Endothelial cell of umbilical vein (primary cell): ENCODE measurements at regions of chr12 and their contacts with region 1.

Region 1: GRCh38 chr12:104108755-104109445 is 29.1 kb downstream of the NFYB start:
- DNase-seq: peak; percentile 90
- H3K4me3 ChIP-seq: no peak overlapping the region
- H3K27ac ChIP-seq: no peak overlapping the region
- H3K4me1 ChIP-seq: no peaks in the 10 kb centered on the region
- H3K27me3 ChIP-seq: no peaks in the 10 kb centered on the region
- CTCF ChIP-seq: peak; percentile 83 to 92
- POLR2A ChIP-seq: no peak

Region 2: GRCh38 chr12:103672401-103673119 is 436.3 kb before region 1 on chr12:
- CTCF ChIA-PET with region 1: no interaction called
- POLR2A ChIA-PET with region 1: no interaction called
- dilution Hi-C with region 1: no loop called
- intact Hi-C with region 1: no loop called
- DNase-seq: no peak
- H3K4me3 ChIP-seq: no peak overlapping the region
- H3K27ac ChIP-seq: no peak overlapping the region
- H3K4me1 ChIP-seq: no peaks in the 10 kb centered on the region
- H3K27me3 ChIP-seq: no peaks in the 10 kb centered on the region
- CTCF ChIP-seq: no peak
- POLR2A ChIP-seq: no peak

Region 3: DNA sequence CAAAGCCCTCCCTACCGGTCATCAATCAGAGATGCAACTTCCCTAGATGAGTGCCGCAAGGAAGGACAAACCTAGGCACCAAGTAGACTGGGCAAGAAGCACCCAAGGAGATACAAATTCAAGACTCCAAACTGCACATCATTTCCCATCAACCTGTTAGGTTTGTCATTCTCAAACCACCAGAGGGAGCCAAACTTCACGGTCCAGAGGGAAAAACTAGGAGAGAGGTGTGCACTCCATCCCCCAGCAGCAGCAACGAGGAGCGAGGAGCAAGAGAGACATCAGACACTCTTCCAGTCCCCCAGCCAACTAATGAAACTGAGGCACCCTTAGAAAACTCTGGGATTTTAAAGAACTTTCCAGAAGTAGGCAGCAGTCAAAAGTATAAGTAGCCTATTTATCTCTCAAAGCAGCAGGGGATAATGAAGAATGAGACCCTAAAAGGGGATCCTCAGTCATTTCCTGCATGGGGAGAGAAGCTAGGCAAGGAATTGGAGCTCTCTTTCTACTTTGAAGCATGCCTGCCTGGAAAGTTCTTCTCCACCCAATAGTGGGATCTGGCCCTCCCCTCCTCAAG is 230.9 kb before region 1 on chr12:
- CTCF ChIA-PET with region 1: interaction called, 32 read pairs
- POLR2A ChIA-PET with region 1: no interaction called
- dilution Hi-C with region 1: no loop called
- intact Hi-C with region 1: loop called (anchors 1 kb)
- DNase-seq: peak; percentile 52
- H3K4me3 ChIP-seq: no peak overlapping the region
- H3K27ac ChIP-seq: no peak overlapping the region
- H3K4me1 ChIP-seq: peaks cover 6% of the 10 kb centered on the region
- H3K27me3 ChIP-seq: no peaks in the 10 kb centered on the region
- CTCF ChIP-seq: peak; percentile 77 to 79
- POLR2A ChIP-seq: no peak

Region 4: GRCh38 chr12:103956516-103957027 is 152.3 kb before region 1 on chr12:
- CTCF ChIA-PET with region 1: interaction called, 6 read pairs
- POLR2A ChIA-PET with region 1: no interaction called
- dilution Hi-C with region 1: no loop called
- intact Hi-C with region 1: loop called (anchors 2 kb)
- DNase-seq: no peak
- H3K4me3 ChIP-seq: peak overlapping the region; percentile 60 to 86 (median 83)
- H3K27ac ChIP-seq: peak overlapping the region; percentile 2
- H3K4me1 ChIP-seq: peaks cover 9% of the 10 kb centered on the region
- H3K27me3 ChIP-seq: no peaks in the 10 kb centered on the region
- CTCF ChIP-seq: no peak
- POLR2A ChIP-seq: no peak

Region 5: GRCh38 chr12:104057771-104058197 is 51.1 kb before region 1 on chr12:
- CTCF ChIA-PET with region 1: interaction called, 106 read pairs
- POLR2A ChIA-PET with region 1: no interaction called
- dilution Hi-C with region 1: no loop called
- intact Hi-C with region 1: loop called (anchors 1 kb)
- DNase-seq: peak; percentile 53
- H3K4me3 ChIP-seq: no peak overlapping the region
- H3K27ac ChIP-seq: no peak overlapping the region
- H3K4me1 ChIP-seq: no peaks in the 10 kb centered on the region
- H3K27me3 ChIP-seq: peaks cover 10 to 19% of the 10 kb centered on the region in 2 experiments
- CTCF ChIP-seq: peak; percentile 58 to 62
- POLR2A ChIP-seq: no peak

Region 6: DNA sequence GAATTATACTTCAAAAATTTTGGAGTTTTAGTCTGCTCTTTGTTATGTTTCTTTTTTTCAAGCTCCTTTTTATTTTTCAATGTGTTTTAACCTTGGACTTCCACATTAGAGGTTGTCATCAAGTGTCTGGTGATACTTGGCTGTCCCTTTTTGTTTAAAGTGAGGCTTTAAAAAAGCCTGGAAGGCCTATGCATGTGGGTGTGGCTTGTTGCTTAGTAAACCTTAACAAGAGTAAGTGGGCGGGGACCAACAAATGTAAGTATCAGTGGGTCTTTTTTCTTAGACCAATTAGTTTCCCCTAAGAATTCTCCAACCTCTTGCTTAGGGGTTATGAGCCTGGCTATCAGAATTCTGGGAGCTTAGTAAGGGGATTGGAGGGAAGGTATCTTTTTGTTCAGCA is 18.2 kb before region 1 on chr12:
- CTCF ChIA-PET with region 1: interaction called, 51 read pairs
- POLR2A ChIA-PET with region 1: interaction called, 4 read pairs
- dilution Hi-C with region 1: no loop called
- intact Hi-C with region 1: no loop called
- DNase-seq: no peak
- H3K4me3 ChIP-seq: no peak overlapping the region
- H3K27ac ChIP-seq: no peak overlapping the region
- H3K4me1 ChIP-seq: no peaks in the 10 kb centered on the region
- H3K27me3 ChIP-seq: no peaks in the 10 kb centered on the region
- CTCF ChIP-seq: no peak
- POLR2A ChIP-seq: no peak

Region 7: DNA sequence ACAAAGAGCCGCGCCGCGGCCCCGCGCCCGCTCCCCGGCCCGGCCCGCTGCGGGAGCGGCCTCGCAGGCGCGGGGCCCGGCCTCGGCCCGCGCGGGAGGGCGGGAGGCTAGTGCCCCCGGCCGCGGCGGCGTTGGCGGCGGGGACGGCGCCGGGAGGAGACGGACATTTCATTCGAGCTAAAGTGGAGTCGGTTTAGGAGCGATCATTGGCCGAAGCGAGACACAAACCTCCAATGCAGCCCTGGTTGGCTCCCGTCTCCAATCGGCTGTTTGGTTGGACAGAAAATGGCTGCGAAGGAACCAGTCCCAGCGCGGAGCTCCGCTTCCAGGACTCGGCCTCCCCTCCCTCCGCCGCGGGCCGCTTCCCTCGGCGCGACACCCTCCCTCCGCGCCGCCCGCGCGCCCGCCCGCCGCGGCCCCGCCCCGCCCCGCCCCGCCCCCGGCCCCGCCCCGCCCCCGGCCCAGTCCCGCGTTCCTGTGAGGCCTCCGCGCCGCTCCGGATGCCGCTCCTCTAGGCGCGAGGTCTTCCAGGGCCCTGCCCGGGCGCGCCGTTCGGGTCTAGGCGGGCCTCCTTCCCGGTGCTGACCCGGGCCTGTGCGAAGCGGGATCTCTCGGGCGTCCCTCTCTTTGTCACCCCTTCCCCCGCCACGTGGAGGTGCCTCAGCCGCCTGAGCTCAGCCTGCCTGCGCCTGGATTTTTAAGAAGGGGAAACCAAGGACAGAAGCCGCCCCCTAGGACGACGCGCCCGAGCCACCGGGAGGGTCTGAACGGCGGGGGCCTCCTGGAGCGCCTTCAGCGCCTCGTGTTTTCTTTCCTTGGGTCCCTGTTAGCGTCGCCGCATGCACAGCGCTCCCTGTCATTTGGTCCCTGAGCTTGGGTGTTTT is 29.3 kb after region 1 on chr12 and contains the start of gene NFYB:
- CTCF ChIA-PET with region 1: interaction called, 12 read pairs
- POLR2A ChIA-PET with region 1: no interaction called
- dilution Hi-C with region 1: no loop called
- intact Hi-C with region 1: no loop called
- DNase-seq: peak; percentile 97
- H3K4me3 ChIP-seq: peak within 1 kb of the TSS; percentile 46 to 96 (median 65)
- H3K27ac ChIP-seq: peak within 1 kb of the TSS; percentile 52
- H3K4me1 ChIP-seq: peaks cover 18% of the 10 kb centered on the region
- H3K27me3 ChIP-seq: peaks cover 0 to 2% of the 10 kb centered on the region in 2 experiments
- CTCF ChIP-seq: no peak
- POLR2A ChIP-seq: peak; percentile 89
- total RNA-seq, gene NFYB: 18.9 and 23.3 TPM in 2 replicates